ENCODE measurements at regions of chr14 and their contacts with region 1.

Region 1: GRCh38 chr14:20682435-20683124 is 1.8 kb upstream of the RNASE4 start:
- DNase-seq: peak; percentile 78
- H3K4me3 Mint-ChIP-seq: no peak overlapping the region
- H3K27ac Mint-ChIP-seq: no peak overlapping the region
- H3K4me1 Mint-ChIP-seq: peaks cover 31% of the 10 kb centered on the region
- H3K27me3 Mint-ChIP-seq: peaks cover 8% of the 10 kb centered on the region

Region 2: GRCh38 chr14:20376071-20376588 is 306.4 kb before region 1 on chr14:
- CTCF ChIA-PET with region 1: no interaction called
- DNase-seq: no peak
- H3K4me3 Mint-ChIP-seq: no peak overlapping the region
- H3K27ac Mint-ChIP-seq: no peak overlapping the region
- H3K4me1 Mint-ChIP-seq: no peaks in the 10 kb centered on the region
- H3K27me3 Mint-ChIP-seq: no peaks in the 10 kb centered on the region

Region 3: GRCh38 chr14:20446889-20447288 is 235.7 kb before region 1 on chr14:
- CTCF ChIA-PET with region 1: no interaction called
- DNase-seq: no peak
- H3K4me3 Mint-ChIP-seq: no peak overlapping the region
- H3K27ac Mint-ChIP-seq: no peak overlapping the region
- H3K4me1 Mint-ChIP-seq: peaks cover 4% of the 10 kb centered on the region
- H3K27me3 Mint-ChIP-seq: no peaks in the 10 kb centered on the region

Region 4: GRCh38 chr14:20632682-20633428 is 49.7 kb before region 1 on chr14:
- CTCF ChIA-PET with region 1: interaction called, 16 read pairs
- DNase-seq: peak; percentile 63
- H3K4me3 Mint-ChIP-seq: peak overlapping the region; percentile 69
- H3K27ac Mint-ChIP-seq: peak overlapping the region; percentile 81
- H3K4me1 Mint-ChIP-seq: peaks cover 33% of the 10 kb centered on the region
- H3K27me3 Mint-ChIP-seq: peaks cover 84% of the 10 kb centered on the region

Region 5: GRCh38 chr14:20657216-20658128 is 25.1 kb before region 1 on chr14:
- CTCF ChIA-PET with region 1: interaction called, 56 read pairs
- DNase-seq: peak; percentile 44
- H3K4me3 Mint-ChIP-seq: no peak overlapping the region
- H3K27ac Mint-ChIP-seq: no peak overlapping the region
- H3K4me1 Mint-ChIP-seq: peaks cover 45% of the 10 kb centered on the region
- H3K27me3 Mint-ChIP-seq: peaks cover 94% of the 10 kb centered on the region

Region 6: DNA sequence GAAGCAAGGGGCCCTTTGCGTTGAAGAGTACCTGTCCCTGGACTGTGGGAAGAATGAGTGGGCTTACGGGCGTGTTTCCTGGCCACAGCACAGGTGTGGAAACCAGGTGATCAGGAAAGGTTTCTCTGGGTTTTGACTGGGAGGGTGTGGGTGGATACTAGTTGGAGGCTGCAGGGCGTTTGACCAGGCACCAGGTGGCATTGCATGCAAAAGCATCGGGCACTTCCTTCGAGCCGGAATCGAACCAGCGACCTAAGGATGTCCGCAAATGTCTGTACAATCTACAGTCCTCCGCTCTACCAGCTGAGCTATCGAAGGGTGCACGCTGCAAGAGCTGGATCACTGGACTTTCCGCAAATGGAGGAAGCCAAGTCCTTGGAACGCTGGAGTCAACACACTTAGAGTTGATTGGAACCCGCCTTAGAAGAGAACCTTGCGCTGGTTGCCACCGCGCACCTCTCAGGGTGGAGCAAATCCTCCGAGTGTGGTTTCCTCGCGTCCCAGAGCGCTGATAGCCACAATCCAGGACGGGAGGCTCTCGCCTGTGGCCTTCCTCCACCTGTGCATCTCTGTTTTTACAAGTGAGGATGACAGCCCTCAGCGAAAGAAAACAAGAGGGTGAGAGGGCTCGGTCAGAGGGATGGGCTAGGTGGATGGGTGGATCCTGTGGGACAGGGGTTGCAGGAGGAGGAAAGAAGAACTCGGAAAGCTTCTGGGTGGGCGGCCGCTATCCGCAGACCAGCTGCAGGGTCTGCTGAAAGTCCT is 19.4 kb before region 1 on chr14:
- CTCF ChIA-PET with region 1: interaction called, 56 read pairs
- DNase-seq: peak; percentile 82
- H3K4me3 Mint-ChIP-seq: peak overlapping the region; percentile 68
- H3K27ac Mint-ChIP-seq: no peak overlapping the region
- H3K4me1 Mint-ChIP-seq: peaks cover 48% of the 10 kb centered on the region
- H3K27me3 Mint-ChIP-seq: peaks cover 70% of the 10 kb centered on the region

Region 7: GRCh38 chr14:20769421-20769820 is 86.8 kb after region 1 on chr14:
- CTCF ChIA-PET with region 1: no interaction called
- DNase-seq: no peak
- H3K4me3 Mint-ChIP-seq: no peak overlapping the region
- H3K27ac Mint-ChIP-seq: no peak overlapping the region
- H3K4me1 Mint-ChIP-seq: no peaks in the 10 kb centered on the region
- H3K27me3 Mint-ChIP-seq: peaks cover 7% of the 10 kb centered on the region

Region 8: DNA sequence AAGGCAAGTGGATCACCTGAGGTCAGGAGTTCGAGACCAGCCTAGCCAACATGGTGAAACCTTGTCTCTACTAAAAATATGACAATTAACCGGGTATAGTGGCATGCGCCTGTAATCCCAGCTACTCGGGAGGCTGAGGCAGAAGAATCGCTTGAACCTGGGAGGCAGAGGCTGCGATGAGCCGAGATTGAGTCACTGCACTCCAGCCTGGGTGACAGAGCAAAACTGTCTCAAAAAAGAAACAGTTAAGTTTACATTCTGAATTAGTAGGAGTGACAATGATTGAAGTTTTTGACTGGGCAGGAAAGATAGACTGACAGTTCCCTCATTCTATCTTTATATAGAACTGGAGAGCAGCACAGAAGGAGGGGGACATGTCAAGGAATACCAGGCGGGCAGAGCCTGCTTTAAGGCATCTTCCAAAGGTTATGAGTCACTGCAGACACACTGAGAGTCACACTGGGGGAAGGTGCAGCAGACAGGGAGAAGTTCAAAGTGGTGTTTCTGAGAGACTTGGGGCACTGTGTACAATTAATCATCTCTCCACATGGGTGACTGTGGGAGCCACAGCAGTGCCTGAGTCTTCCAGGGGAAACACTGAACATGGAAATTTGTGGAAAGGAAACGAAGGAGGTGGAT is 165.9 kb after region 1 on chr14:
- CTCF ChIA-PET with region 1: no interaction called
- DNase-seq: no peak
- H3K4me3 Mint-ChIP-seq: no peak overlapping the region
- H3K27ac Mint-ChIP-seq: no peak overlapping the region
- H3K4me1 Mint-ChIP-seq: no peaks in the 10 kb centered on the region
- H3K27me3 Mint-ChIP-seq: peaks cover 13% of the 10 kb centered on the region